ENCODE measurements at regions of chr9 and their contacts with region 1.

Region 1: GRCh38 chr9:124527781-124528180 is 20.6 kb upstream of the NR5A1 start:
- DNase-seq: no peak

Region 2: DNA sequence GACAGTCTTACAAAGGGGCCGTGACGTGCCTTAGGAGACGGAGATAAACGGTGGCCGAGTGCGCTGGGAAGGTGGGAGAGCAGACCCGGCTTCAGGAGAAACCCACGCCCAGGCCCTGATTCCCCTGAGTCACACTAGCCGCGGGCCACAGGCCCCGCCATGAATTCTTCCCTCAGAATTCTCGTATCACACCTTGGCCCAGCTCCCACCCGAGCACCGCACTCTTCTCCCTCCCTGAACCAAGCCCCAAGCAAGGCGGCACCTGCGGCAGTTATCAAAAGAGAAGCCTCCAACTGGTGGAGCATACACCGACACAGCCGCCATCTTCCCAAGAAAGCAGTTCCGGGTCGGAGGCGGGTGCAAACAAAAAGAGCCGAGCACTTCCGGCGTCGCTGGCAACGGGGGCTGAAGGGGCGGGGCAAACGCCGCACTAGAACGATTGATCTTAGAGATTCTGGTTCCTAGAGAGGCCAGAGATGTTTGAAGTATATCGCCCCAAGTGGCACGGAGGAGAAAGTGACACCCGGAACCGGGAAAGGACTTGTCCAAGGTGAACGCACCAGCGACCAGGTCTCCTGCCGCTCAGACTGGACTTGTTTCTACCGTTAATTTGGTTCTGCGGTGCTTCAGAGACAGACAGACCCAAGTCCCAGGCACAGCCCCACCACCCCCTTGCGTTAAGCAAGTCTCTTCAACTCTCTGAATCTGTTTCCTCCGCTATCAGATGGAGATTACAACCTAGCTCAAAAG is 112.5 kb before region 1 on chr9 and contains the start of gene PSMB7:
- in situ Hi-C with region 1: loop called (anchors 25 kb)
- DNase-seq: peak; percentile 96
- total RNA-seq, gene PSMB7: 422 and 482 TPM in 2 replicates

Measured in SK-MEL-5 (cell line).